ENCODE measurements at regions of chr4 and their contacts with region 1.

Region 1: GRCh38 chr4:26330186-26330787 is 9.5 kb downstream of the RBPJ start:
- DNase-seq: peak in 2 of 5 donors; percentile 39 to 53
- H3K4me3 ChIP-seq: no peak overlapping the region
- H3K4me3 Mint-ChIP-seq: no peak overlapping the region
- H3K27ac ChIP-seq: no peak overlapping the region
- H3K27ac Mint-ChIP-seq: no peak overlapping the region
- H3K4me1 ChIP-seq: peaks cover 10% of the 10 kb centered on the region
- H3K4me1 Mint-ChIP-seq: peaks cover 27 to 43% (median 41%) of the 10 kb centered on the region in 3 donors
- H3K27me3 ChIP-seq: no peaks in the 10 kb centered on the region
- H3K27me3 Mint-ChIP-seq: no peaks in the 10 kb centered on the region

Region 2: GRCh38 chr4:26319467-26319948 is 10.8 kb before region 1 on chr4:
- CTCF ChIA-PET with region 1: interaction called, 15 read pairs
- POLR2A ChIA-PET with region 1: no interaction called
- DNase-seq: peak; percentile 90 to 98 (median 95)
- H3K4me3 ChIP-seq: peak overlapping the region; percentile 98
- H3K4me3 Mint-ChIP-seq: peak overlapping the region; percentile 92 to 100 (median 98)
- H3K27ac ChIP-seq: peak overlapping the region; percentile 89
- H3K27ac Mint-ChIP-seq: peak overlapping the region; percentile 98 to 100 (median 99)
- H3K4me1 ChIP-seq: peaks cover 17% of the 10 kb centered on the region
- H3K4me1 Mint-ChIP-seq: peaks cover 34 to 40% (median 34%) of the 10 kb centered on the region in 3 donors
- H3K27me3 ChIP-seq: no peaks in the 10 kb centered on the region
- H3K27me3 Mint-ChIP-seq: peaks cover 0 to 4% of the 10 kb centered on the region in 2 donors

Region 3: GRCh38 chr4:26342328-26343037 is 12.2 kb after region 1 on chr4:
- CTCF ChIA-PET with region 1: interaction called, 54 read pairs
- POLR2A ChIA-PET with region 1: no interaction called
- DNase-seq: no peak
- H3K4me3 ChIP-seq: no peak overlapping the region
- H3K4me3 Mint-ChIP-seq: peak overlapping the region in 1 of 7 donors; percentile 0
- H3K27ac ChIP-seq: no peak overlapping the region
- H3K27ac Mint-ChIP-seq: no peak overlapping the region
- H3K4me1 ChIP-seq: peaks cover 14% of the 10 kb centered on the region
- H3K4me1 Mint-ChIP-seq: peaks cover 51 to 67% (median 65%) of the 10 kb centered on the region in 3 donors
- H3K27me3 ChIP-seq: no peaks in the 10 kb centered on the region
- H3K27me3 Mint-ChIP-seq: peaks cover 0 to 2% of the 10 kb centered on the region in 2 donors

Region 4: GRCh38 chr4:26410385-26411293 is 80.4 kb after region 1 on chr4:
- CTCF ChIA-PET with region 1: interaction called, 47 read pairs
- POLR2A ChIA-PET with region 1: no interaction called
- DNase-seq: peak in 3 of 5 donors; percentile 15 to 43 (median 35)
- H3K4me3 ChIP-seq: no peak overlapping the region
- H3K4me3 Mint-ChIP-seq: no peak overlapping the region
- H3K27ac ChIP-seq: no peak overlapping the region
- H3K27ac Mint-ChIP-seq: peak overlapping the region in 1 of 8 donors; percentile 14
- H3K4me1 ChIP-seq: no peaks in the 10 kb centered on the region
- H3K4me1 Mint-ChIP-seq: peaks cover 0 to 2% (median 0%) of the 10 kb centered on the region in 3 donors
- H3K27me3 ChIP-seq: no peaks in the 10 kb centered on the region
- H3K27me3 Mint-ChIP-seq: no peaks in the 10 kb centered on the region

Region 5: GRCh38 chr4:26418107-26418506 is 87.8 kb after region 1 on chr4:
- CTCF ChIA-PET with region 1: interaction called, 16 read pairs
- POLR2A ChIA-PET with region 1: no interaction called
- DNase-seq: no peak
- H3K4me3 ChIP-seq: no peak overlapping the region
- H3K4me3 Mint-ChIP-seq: no peak overlapping the region
- H3K27ac ChIP-seq: no peak overlapping the region
- H3K27ac Mint-ChIP-seq: no peak overlapping the region
- H3K4me1 ChIP-seq: no peaks in the 10 kb centered on the region
- H3K4me1 Mint-ChIP-seq: peaks cover 0 to 4% (median 4%) of the 10 kb centered on the region in 3 donors
- H3K27me3 ChIP-seq: no peaks in the 10 kb centered on the region
- H3K27me3 Mint-ChIP-seq: no peaks in the 10 kb centered on the region